ENCODE measurements at regions of chr5 and their contacts with region 1.

Region 1: DNA sequence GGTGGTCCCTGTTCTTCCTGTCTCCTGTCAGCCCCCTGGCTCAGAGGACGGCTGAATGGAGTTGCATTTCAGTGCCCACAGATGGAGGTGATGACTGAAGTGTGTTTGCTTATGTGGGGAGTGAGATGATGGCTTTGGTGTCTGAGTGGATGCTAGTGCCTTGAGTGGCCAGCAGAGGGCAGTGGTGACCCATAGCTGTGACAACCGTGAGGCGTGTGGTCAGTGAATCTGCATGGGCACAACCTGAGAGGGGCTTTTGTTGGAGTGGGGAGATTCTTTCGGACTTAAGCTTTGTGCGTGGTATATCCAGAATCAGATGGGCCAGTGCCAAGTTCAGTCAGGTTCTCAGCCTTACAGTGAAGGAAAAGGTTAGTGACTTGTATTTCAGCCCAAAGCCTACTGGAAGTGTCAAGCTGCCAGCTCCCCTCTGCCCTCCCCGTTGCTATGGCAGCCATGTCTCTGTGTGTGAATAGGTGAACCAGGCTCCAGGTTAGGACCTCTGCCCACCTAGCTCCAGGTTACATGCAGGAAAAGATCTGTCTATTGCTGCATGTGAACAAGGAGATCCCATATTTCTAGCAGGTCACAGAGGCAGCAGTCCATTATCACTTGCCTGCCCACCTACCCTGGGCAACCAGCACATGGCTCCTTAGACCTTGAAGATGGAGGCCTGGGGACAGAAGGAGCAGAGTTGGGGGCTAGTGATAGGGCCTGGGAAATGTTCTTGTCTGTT is 14.7 kb upstream of the CXXC5 start:
- DNase-seq: peak; percentile 82
- ATAC-seq: peak; percentile 20

Region 2: DNA sequence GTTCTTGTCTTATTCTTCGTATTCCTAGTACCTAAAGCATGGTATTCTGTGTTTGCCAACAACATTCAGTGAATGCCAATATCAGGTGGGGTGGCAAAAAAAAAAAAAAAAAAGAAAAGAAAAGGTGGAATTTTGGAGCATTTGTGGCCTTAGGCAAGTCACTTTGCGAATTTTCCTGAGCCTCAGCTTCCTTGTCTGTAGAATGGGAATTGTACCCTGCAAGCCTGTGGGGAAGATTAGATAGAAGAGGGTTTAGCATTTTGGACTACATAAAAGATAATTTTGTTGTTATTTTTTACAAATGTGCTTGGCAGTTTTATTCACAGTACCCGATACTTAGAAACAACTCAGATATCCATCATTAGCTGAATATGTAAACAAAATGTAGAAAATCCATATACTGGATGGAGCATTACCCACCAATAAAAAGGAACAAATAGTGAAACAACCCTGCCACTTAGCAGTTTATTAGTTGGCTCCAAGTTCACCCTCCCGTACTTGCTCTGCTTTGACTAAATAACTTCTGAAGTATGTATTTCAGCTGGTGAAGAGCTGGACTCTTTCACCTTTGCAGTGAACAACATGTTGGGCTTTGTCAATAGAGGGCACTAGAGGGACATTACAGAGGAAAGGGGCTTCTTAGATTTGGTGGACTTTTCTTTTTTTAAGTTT is 58.7 kb before region 1 on chr5:
- intact Hi-C with region 1: no loop called
- DNase-seq: no peak
- ATAC-seq: peak; percentile 34

Region 3: DNA sequence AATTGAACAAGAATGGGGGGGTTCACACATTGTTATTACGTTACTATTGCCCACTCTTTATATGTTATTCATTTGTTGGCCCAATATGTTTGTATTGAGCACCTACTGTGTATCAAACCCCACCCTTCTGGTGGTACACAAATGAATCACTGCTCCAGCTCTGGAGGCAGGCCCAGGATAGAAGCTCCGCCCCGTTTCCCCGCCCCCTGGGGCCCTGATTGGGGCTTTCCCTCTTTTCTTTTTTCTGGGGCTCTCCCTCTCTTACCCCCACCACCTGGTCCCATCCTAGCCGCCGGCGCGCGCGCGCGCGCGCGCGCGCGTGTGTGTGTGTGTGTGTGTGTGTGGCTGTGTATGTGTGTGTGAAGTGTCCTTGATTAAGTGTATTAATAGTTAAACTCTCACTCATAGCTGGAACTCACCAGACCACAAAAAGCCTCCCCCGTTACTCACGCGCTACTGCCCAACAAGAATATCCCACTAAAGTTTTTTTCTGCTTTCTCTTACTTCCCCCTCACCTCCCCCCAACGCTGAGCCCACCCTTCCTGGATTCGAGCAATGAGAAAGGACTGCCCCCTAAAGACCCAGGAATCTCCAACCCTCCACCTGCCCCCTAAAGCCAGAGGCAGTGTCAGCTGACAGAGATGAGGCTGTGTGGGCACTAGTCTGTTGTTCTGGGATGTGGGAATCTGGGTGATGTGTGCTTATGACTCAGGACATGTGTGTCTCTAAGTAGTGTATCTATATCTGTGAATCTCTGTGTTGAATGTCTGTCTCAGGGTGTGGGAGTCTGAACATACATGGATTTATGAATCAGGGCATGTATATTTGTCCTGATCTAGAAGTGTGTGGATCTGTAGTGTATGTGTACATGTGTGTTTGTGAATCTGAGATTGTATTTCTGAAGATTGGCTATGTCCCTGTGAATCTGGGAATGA is 18.7 kb after region 1 on chr5:
- intact Hi-C with region 1: loop called (anchors 1 kb)
- DNase-seq: peak; percentile 77
- ATAC-seq: peak; percentile 14

Region 4: DNA sequence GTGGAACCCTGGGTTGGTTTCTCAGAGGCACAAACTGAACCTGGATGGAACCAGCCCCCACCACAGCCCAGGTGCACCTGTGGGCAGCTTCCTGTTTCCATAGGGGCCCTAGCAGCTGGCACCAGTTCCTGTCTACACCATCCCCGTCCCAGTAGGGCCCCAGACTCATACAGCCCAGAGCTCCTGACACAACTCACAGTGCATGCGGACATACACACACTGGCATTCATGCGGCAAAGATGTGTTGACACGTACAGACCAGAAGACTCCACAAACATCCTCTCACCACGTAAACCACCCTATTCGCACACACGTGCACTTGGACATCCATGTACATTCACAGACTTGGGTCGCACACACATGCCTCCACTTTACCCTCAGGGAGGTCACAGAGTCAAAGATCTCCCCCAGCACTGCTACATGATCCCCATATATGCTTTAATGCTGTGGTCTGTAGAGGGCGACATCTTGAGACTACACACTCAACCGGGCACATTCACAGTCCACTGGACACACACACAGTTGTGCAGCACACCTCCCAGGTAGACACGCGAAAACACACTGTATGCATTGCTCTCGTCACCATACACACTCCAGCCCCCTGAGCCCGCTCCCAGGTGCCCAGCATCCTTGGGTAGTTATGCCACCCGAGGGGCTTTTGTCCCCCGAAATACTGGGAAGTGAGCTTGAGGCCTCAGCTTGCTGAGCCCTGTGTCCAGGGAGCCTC is 37.1 kb after region 1 on chr5:
- intact Hi-C with region 1: loop called (anchors 2 kb)
- DNase-seq: no peak
- ATAC-seq: no peak

Region 5: DNA sequence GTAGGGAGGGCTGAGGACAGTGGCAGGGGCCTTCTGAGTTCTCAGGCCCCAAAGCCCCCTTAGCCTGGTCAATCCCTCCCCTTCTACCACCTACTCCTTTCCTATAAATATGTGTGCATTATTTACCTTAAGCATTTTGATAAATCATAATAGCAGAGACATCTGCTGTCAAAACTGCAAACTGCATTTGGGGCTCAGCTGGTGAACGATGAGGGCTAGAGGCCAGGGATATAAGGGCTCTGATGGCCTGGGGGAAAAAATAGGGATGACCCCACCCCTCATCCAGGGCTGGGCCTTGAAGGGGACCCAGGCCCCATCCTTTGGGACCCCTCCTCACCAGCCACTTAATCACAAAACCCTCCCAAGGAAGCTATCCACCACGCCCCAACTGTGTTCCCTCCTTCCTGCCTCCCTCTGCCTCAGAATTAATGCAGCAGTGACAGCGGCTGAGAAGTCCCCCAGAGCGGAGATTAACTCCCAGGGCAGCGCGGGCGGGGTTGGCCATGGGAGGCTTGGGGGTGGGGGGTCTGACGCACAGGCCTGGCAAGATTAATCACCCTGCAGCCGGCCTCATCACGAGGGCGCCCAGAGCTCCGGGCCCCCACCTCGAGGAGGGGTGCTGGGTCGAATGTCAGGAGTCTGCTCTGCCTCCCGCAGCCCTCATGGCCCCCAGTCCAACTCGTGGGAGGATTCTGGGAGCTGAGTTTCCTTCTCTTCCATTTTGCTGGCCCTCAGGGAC is 56.8 kb after region 1 on chr5:
- intact Hi-C with region 1: loop called (anchors 1 kb)
- DNase-seq: no peak
- ATAC-seq: peak; percentile 11

Region 6: DNA sequence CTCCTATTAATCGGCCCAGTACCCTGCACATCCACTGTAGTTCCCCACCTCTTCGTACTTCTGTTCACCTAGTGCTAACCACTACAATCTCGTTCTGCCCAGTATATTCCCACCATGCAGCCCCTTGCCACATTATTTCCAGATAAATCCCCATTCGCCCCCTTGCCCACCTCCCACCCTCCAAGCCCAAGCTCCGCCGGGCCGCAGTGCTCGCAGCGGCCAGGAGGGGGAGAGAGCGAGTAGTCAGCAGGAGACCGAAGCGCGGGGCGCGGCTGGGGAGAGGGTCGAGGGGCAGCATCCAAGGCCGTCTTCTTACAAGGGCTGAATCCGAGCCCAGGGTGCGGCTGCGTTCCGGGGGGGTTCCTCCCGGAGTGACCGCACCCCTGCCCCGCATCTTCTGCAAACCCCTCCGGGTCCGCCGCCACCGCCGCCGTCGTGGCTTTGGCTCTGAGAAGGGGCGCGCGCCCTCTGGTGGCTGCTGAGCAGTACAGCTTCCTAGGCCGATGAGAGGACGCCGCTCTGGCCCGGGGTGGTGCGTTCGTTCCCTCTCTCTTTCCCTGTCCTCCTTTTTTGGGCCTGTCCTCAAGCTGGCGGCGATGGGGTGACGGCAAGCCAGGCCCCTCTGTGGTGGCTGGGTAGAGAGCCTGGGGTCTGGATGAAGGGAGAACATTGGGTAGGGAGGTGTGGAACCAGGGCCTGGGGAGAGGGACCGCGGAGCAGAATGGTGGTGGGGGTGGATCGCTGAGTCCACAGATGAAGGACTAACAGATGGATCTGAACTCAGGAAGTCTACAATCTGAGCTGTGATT is 132.2 kb after region 1 on chr5:
- intact Hi-C with region 1: loop called (anchors 1 kb)
- DNase-seq: peak; percentile 94
- ATAC-seq: peak; percentile 88

Region 7: DNA sequence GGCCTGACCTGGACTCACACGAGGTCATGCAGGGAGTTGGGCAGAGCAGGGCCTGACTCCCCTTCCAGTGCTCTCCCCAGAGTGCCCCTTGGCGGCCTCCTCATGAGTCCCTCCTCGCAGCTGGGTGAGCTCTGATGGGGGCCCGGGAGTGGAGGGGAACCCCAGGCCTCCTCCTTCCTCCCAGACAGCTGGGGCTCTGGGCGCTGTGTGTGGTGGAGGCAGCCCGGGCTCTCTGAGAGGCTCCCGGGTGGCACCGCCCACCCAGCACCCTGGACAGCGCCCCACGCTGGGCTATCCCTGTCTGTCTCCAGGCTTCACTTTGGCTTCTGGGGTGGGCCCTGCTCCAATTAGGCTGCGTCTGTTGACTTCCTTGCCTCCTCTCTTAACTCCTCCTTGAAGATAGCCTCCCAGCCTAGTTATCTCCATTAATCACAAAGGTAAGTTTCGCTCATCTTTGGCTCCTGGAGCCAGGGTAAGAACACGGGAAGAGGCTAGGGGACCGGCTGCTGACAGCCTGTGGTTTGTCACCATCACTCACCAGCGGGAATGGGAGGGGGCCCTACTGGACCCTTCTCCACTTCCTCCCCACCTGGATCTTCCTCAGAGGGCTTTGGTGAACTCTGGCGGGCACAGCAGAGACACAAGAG is 175.2 kb after region 1 on chr5:
- intact Hi-C with region 1: no loop called
- DNase-seq: no peak
- ATAC-seq: no peak

Region 8: DNA sequence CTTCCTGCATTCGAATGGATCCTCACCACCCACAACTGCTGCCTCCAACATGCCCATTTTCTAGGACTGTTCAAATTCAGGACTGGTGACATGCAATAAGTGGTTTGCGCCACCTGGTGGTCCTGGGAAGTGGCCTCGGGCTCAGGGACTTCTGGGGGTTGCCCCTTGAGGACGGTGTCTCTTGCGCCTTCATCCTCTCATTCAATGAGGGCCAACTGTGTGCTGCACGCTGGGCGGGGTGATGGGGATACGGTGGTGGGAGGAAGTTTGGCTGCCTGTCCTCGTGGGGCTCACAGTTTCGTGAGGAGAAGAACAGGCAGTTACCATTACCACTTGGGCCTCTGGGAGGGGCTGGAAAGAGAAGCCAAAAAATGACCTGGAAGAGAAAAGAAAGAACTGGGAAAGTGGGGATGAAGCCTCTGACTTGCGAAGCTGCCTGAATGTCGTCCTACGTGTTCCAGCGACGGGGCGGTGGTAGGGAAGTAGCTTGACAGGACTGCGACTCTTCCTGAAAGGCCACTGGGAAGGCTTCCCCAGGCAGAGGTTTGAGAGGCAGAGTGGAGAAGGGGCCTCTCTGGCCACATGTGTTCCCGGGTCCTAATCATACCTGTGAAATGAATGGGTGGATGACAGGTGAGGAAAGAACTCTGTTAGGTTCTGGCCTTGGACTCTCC is 211.1 kb after region 1 on chr5:
- intact Hi-C with region 1: loop called (anchors 10 kb)
- DNase-seq: no peak
- ATAC-seq: no peak

Measured in Right ventricle myocardium inferior (tissue), 1 donor.